ENCODE measurements at regions of chr5 and their contacts with region 1.

Region 1: DNA sequence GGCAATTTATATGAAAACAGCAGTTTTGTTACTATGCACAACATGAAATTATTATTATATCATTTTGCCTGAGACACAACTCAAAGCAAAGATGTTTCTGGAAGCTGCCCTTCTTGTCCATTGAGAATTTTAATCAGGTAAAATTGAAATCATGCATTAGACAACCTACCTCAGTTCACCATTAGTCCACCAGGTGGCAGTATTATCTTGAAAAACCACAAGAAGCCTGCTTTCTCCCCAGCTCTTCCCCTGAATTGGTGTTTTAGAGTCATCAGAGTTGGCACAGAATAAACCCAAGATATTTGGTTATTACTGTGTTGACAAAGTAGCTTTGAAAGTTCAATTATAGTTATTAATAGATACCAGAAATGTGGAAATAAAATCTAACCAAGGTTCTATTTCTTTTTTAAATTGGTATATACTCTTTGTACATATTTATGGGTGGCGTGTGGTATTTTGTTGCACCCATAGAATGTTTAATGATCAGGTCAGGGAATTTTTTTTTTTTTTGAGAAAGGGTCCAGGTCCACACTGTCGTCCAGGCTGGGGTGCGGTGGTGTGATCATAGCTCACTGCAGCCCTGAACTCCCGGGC is 25.7 kb downstream of the UTP15 start:
- DNase-seq: peak; percentile 62

Region 2: DNA sequence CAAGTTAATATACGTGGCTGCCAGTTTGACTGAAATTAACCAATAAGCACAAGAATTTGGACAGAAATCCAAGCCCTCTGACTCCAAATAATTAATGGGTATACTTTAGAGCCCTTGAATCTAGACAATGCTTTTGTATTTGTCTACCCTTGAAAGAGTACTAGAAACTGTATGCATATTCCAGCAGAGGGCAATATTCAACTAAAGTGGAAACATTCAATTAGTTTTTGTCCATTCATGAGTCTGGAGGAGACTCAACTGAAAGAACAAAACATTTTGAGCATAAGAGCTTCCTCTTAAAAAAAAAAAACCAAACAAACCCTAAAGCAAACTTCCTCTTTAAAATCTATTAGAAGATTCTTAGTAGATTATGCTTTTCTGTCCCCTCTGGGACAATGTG is 192.6 kb after region 1 on chr5:
- CTCF ChIA-PET with region 1: interaction called, 10 read pairs
- POLR2A ChIA-PET with region 1: interaction called, 3 read pairs
- DNase-seq: no peak

Region 3: DNA sequence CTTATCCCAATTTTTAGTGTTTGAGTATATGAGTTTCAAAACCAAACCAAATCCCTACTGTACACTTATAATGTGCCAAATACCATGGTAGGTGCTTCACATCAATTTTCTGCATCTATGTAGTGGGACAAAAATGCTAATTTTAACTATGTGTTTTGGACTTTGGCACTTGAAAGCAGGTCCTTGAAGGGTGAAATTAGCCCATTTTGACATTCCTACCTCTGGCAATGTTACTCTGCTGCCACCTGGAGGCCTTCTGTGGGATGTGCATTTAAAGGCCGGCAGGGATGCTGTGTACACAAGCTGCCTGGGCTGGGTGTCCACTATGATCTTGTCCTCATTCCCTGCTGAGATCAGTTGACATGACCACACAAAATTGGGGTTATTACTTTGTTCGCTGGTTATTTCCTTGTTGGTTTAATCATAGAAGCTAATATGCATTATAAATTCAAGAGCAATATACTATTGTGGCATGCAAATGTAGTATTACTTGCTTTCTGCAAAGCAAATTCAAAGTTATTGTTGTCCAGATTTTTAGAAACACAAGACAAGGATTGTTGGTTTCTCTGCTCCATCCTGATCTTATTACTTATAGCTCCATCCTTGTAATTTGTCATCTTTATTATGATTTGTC is 201.6 kb after region 1 on chr5:
- CTCF ChIA-PET with region 1: interaction called, 28 read pairs
- POLR2A ChIA-PET with region 1: interaction called, 4 read pairs
- DNase-seq: peak; percentile 70